ENCODE measurements at regions of chr1 and their contacts with region 1.

Region 1: GRCh38 chr1:5751833-5752745 is 240.1 kb downstream of the NPHP4 start:
- DNase-seq: peak in 1 of 4 experiments; percentile 46
- ATAC-seq: peak; percentile 67
- H3K4me3 ChIP-seq: no peak overlapping the region
- H3K27ac ChIP-seq: no peak overlapping the region
- H3K4me1 ChIP-seq: no peaks in the 10 kb centered on the region; a peak in 2 of 5 replicates
- H3K27me3 ChIP-seq: peaks cover 51 to 81% of the 10 kb centered on the region in 2 experiments
- CTCF ChIP-seq: peak; percentile 42 to 55 (median 54); a peak in 5 of 6 replicates
- EP300 ChIP-seq: no peak
- POLR2A ChIP-seq: no peak
- RAD21 ChIP-seq: peak in 1 of 2 experiments; percentile 58; a peak in 2 of 4 replicates

Region 2: DNA sequence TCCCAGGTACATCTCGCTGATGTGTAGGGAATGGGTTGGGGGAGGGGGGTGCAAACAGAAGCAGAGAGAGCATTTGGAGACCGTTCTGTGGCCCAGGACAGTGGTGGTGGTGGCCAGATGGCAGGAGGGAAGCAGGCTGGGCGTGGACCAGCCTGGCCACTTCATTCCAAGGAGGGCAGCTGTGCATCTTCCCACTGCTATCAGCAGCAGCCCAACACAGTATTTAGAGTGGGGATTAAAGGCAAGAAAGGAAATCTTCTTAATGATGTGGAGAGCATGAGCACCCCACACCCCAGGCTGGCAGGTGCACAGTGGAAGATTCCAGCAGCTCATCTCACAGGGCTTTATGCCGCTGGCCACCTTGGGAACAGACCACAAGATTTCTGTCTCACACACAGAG is 41.4 kb after region 1 on chr1:
- CTCF ChIA-PET with region 1: no interaction called
- POLR2A ChIA-PET with region 1: no interaction called
- in situ Hi-C with region 1: no loop called
- intact Hi-C with region 1: no loop called
- DNase-seq: no peak
- ATAC-seq: no peak
- H3K4me3 ChIP-seq: no peak overlapping the region
- H3K27ac ChIP-seq: no peak overlapping the region
- H3K4me1 ChIP-seq: no peaks in the 10 kb centered on the region
- H3K27me3 ChIP-seq: peaks cover 5 to 23% of the 10 kb centered on the region in 2 experiments; a peak in 4 of 5 replicates
- CTCF ChIP-seq: no peak
- EP300 ChIP-seq: no peak
- POLR2A ChIP-seq: no peak
- RAD21 ChIP-seq: no peak

Region 3: DNA sequence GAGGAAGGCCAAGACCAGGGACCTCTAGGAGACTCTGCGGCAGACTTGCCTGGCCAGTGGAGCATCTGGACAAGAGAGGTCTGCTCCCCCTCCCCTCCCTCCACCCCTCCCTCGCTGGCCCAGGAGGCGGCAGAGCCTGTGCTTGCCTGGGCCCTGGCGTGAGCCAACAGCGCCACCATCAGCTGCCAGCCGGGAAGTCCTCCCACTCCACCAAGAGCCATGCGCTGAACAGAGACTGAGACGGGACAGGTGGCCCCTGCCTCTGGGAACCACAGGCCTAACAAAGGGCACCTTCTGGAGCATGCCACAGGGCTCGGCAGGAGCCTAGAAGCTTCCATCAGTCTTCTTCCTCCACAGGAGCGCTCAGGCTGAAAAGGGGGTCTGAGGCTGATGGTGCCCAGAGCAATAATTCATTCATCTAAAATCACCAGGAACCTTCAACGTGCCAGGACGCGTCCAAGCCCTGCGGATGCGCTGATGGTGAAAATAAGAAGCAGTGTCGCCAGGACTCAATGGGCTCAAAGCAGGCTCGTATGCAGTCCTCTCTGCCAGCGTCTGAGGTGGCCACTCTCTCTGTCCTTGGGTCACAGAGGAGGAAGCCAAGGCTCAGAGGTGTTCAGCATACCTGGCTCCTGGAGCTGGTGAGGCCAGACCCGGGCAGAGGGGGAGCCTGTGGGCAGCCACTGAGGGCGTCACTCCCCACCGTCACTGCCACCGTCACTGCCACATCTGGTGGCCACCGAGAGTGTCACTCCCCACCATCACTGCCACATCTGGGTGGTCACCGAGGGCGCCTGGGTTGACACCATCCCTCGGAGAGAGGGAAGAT is 78.9 kb after region 1 on chr1:
- CTCF ChIA-PET with region 1: no interaction called
- POLR2A ChIA-PET with region 1: no interaction called
- in situ Hi-C with region 1: no loop called
- intact Hi-C with region 1: loop called (anchors 10 kb)
- DNase-seq: peak; percentile 60 to 75 (median 72)
- ATAC-seq: peak; percentile 91
- H3K4me3 ChIP-seq: no peak overlapping the region
- H3K27ac ChIP-seq: no peak overlapping the region
- H3K4me1 ChIP-seq: peaks cover 0 to 10% of the 10 kb centered on the region in 2 experiments; a peak in 1 of 5 replicates
- H3K27me3 ChIP-seq: peaks cover 38 to 66% of the 10 kb centered on the region in 2 experiments
- CTCF ChIP-seq: peak; percentile 59 to 82 (median 70)
- EP300 ChIP-seq: no peak
- POLR2A ChIP-seq: no peak
- RAD21 ChIP-seq: peak in 1 of 2 experiments; percentile 79; a peak in 2 of 4 replicates

Measured in K562 (cell line).